ENCODE measurements at regions of chr1 and their contacts with region 1.

Region 1: DNA sequence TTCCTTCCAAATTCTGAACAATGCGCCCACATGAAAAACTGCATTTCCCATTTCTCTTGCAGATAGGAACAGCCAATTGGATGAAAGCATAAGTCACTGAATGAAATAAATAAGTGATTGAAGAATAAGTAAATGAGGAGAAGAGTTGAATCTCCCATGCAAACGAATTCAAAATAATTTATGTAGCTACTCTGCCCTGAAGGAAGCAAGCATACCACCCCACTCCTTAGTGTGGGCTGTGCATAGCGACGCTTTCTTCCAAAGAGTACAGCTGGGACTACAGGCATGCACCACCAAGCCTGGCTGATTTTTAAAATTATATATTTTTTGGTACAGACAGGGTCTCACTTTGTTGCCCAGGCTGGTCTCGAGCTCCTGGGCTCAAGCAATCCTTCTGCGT is 16.5 kb upstream of the RIMKLA start:
- DNase-seq: no peak
- H3K4me3 ChIP-seq: no peak overlapping the region
- H3K27ac ChIP-seq: no peak overlapping the region
- H3K4me1 ChIP-seq: no peaks in the 10 kb centered on the region
- H3K27me3 ChIP-seq: no peaks in the 10 kb centered on the region
- CTCF ChIP-seq: no peak
- POLR2A ChIP-seq: no peak

Region 2: GRCh38 chr1:41713557-41714327 is 650.3 kb before region 1 on chr1:
- intact Hi-C with region 1: loop called (anchors 5 kb)
- DNase-seq: no peak
- H3K4me3 ChIP-seq: no peak overlapping the region
- H3K27ac ChIP-seq: no peak overlapping the region
- H3K4me1 ChIP-seq: no peaks in the 10 kb centered on the region
- H3K27me3 ChIP-seq: no peaks in the 10 kb centered on the region
- CTCF ChIP-seq: no peak
- POLR2A ChIP-seq: no peak

Measured in breast epithelium (tissue), 4 donors.